Ovary (tissue), 10 donors: ENCODE measurements at regions of chr13 and their contacts with region 1.

Region 1: DNA sequence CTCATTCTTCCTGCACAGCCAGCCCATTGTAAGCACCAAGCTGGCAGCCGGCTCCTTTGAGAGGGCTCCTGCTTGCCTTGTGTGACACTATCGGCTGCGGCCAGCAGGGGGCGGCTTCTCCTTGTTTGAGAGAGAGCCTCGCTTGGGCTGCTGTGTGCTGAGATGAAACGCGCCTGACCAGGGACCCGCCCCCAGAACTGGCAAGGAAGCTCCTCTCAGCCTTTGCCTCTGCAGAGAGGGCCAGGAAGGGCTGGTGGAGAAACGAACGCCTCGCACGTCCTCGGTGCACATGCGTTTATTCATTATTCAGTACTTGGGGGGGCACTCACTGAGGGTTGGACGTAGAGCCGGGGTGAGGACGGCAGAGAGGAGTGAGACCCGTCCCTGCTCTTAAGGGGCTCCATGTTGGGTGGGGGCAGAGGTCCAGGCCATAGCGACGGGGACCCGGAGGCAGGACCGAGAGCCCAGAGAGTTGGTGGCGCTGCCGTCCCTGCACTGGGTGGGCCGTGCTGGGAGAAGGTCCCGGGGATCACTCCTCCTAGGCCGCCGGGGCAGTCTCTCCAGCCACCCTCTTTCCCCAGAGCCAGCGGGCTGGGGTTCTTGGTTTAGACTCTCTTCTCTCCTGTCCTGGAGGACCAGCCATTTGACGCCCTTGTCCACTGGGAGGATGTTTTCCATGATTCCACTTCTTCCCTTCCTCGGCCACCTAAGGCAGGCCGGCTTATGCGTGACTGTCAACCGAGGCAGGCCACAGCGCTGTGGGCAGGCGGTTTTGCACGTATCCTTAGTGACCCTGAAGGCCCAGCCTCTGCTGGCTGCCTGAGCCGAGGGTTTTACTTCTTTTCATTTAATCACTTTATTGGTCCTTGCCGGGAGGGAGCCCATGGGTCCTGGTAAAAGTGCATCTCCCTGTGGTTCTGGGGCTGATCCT is 174.5 kb downstream of the KATNAL1 start:
- DNase-seq: peak; percentile 97 to 99 (median 98)
- H3K4me3 ChIP-seq: no peak overlapping the region
- H3K27ac ChIP-seq: no peak overlapping the region
- H3K4me1 ChIP-seq: peaks cover 2% of the 10 kb centered on the region
- H3K27me3 ChIP-seq: no peaks in the 10 kb centered on the region
- CTCF ChIP-seq: peak; percentile 81 to 93 (median 89)
- EP300 ChIP-seq: no peak
- POLR2A ChIP-seq: no peak

Region 2: GRCh38 chr13:29892151-29892550 is 240.7 kb before region 1 on chr13:
- intact Hi-C with region 1: no loop called
- DNase-seq: no peak
- H3K4me3 ChIP-seq: no peak overlapping the region
- H3K27ac ChIP-seq: no peak overlapping the region
- H3K4me1 ChIP-seq: no peaks in the 10 kb centered on the region
- H3K27me3 ChIP-seq: no peaks in the 10 kb centered on the region
- CTCF ChIP-seq: no peak
- EP300 ChIP-seq: no peak
- POLR2A ChIP-seq: no peak

Region 3: GRCh38 chr13:30114571-30115256 is 18.2 kb before region 1 on chr13:
- intact Hi-C with region 1: no loop called
- DNase-seq: peak; percentile 80 to 93 (median 88)
- H3K4me3 ChIP-seq: peak overlapping the region; percentile 54
- H3K27ac ChIP-seq: peak overlapping the region; percentile 27 to 50
- H3K4me1 ChIP-seq: peaks cover 2% of the 10 kb centered on the region
- H3K27me3 ChIP-seq: no peaks in the 10 kb centered on the region
- CTCF ChIP-seq: peak; percentile 54 to 89 (median 79)
- EP300 ChIP-seq: no peak
- POLR2A ChIP-seq: no peak

Region 4: DNA sequence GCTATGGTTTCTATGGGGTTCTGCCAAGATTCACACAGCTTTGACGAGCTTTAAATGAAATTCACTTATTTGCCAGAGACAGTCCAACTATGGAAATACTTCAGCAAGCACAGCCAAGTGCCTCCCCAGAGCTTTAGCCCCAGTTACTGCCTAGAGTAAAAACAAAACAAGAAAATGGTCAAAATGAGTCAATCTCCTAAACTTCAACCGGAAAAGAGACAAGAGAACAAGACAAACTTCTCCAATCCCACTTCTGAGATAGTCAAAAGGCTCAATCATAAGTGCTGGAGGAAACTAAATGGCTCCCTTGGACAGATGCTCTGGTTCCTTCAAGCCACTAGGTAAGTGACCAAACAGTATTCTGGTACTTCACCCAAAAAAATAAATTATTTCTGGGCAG is 108.6 kb after region 1 on chr13:
- intact Hi-C with region 1: no loop called
- DNase-seq: no peak
- H3K4me3 ChIP-seq: no peak overlapping the region
- H3K27ac ChIP-seq: no peak overlapping the region
- H3K4me1 ChIP-seq: no peaks in the 10 kb centered on the region
- H3K27me3 ChIP-seq: no peaks in the 10 kb centered on the region
- CTCF ChIP-seq: no peak
- EP300 ChIP-seq: no peak
- POLR2A ChIP-seq: no peak

Region 5: GRCh38 chr13:30334663-30335386 is 201.9 kb after region 1 on chr13:
- intact Hi-C with region 1: loop called in 1 of 4 experiments (anchors 10 kb)
- DNase-seq: no peak
- H3K4me3 ChIP-seq: no peak overlapping the region
- H3K27ac ChIP-seq: no peak overlapping the region
- H3K4me1 ChIP-seq: peaks cover 10% of the 10 kb centered on the region
- H3K27me3 ChIP-seq: no peaks in the 10 kb centered on the region
- CTCF ChIP-seq: no peak
- EP300 ChIP-seq: no peak
- POLR2A ChIP-seq: no peak

Region 6: DNA sequence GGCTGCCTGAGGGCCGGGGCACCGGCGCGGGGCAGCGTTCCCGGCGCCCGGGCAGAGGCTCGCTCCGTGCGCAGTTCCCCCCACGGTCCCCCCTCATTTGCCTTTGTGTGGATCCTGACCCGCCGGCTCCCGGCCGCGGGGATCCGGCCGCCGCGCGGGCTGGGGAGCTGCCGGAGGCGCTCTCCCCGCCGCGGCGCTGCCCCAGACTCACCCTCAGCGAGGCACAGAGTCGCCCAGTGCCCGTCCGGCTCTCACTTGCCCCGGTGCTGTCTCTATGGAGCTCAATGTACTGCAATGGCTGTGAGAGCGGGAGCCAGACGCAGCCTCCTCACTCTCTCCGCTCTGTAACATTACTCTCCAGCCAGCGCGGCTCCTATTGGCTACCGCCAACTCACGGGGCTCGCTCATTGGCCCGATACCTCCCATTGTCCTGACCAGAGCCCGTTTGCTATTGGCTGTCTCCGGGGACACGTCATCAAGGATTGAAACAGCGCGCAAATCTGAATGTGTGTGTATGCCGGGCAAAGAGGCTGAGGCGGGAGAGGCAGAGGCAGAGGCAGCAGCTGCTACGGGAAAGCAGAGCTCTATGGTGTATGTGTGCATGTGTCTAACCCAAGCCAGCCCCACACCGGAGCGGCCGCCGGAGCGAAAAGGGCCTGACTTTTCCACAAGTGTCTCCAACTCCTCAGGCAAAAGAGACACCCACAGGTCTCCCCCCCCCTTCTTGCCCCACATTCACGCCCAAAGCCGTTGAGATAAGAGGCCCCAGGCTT is 332.9 kb after region 1 on chr13 and contains the start of gene HMGB1:
- intact Hi-C with region 1: loop called in 2 of 4 experiments (anchors 5 to 10 kb)
- DNase-seq: peak; percentile 97 to 98 (median 97)
- H3K4me3 ChIP-seq: peak within 1 kb of the TSS; percentile 93
- H3K27ac ChIP-seq: peak within 1 kb of the TSS; percentile 99 to 100
- H3K4me1 ChIP-seq: peaks cover 1% of the 10 kb centered on the region
- H3K27me3 ChIP-seq: no peaks in the 10 kb centered on the region
- CTCF ChIP-seq: no peak
- EP300 ChIP-seq: no peak
- POLR2A ChIP-seq: peak; percentile 98
- total RNA-seq, gene HMGB1: 163 to 283 (median 240) TPM

Region 7: GRCh38 chr13:30802953-30803478 is 670.1 kb after region 1 on chr13:
- intact Hi-C with region 1: loop called (anchors 5 kb)
- DNase-seq: peak; percentile 84 to 91 (median 86)
- H3K4me3 ChIP-seq: peak overlapping the region; percentile 35
- H3K27ac ChIP-seq: no peak overlapping the region
- H3K4me1 ChIP-seq: peaks cover 4% of the 10 kb centered on the region
- H3K27me3 ChIP-seq: no peaks in the 10 kb centered on the region
- CTCF ChIP-seq: peak; percentile 84 to 92 (median 86)
- EP300 ChIP-seq: no peak
- POLR2A ChIP-seq: no peak

Region 8: DNA sequence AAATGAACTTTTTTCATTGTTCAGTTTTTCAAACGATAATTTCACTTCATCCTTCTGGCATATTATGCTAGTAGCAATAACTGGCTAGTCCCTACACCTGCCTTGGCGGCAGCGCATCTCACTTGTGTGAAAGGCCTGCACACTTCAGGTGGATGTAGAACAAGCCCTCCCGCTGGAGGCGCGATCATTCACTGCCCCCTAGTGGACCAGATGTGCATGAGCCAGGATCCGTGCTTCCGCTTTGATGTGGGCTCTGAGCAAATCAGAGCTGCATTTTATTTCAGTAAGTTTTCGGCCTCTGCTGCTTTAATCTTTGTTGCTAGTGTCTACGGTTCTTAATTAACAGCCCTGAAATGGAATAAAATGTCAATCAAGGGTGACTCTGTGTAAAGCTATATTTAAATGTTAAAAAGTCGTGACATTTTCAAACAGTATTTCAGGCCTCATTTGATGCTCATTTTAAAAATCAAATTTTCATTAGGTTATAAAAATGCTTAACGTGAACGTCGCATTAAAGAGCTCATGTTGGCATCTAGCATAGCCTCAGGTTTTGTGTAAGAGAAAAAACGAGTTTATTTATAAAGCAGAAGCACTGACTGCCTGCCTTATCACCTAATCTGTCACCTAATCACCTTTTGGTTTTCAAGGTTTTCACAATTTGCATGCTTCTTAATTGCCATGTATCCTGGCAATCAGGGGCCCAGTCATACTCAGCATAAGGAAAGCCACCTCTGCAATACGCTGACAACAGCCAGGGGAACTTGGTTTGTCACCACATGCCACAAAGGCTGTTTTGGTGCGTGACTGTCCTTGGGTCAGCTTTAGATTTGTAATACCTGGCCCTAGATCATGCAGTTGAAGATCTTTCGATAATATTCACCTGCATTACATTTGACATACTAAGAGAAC is 911.7 kb after region 1 on chr13:
- intact Hi-C with region 1: loop called in 1 of 4 experiments (anchors 5 kb)
- DNase-seq: peak; percentile 68 to 85 (median 81)
- H3K4me3 ChIP-seq: no peak overlapping the region
- H3K27ac ChIP-seq: no peak overlapping the region
- H3K4me1 ChIP-seq: peaks cover 4% of the 10 kb centered on the region
- H3K27me3 ChIP-seq: no peaks in the 10 kb centered on the region
- CTCF ChIP-seq: peak; percentile 60 to 82 (median 74)
- EP300 ChIP-seq: no peak
- POLR2A ChIP-seq: no peak